Endothelial cell of umbilical vein (primary cell): ENCODE measurements at regions of chr7 and their contacts with region 1.

Region 1: DNA sequence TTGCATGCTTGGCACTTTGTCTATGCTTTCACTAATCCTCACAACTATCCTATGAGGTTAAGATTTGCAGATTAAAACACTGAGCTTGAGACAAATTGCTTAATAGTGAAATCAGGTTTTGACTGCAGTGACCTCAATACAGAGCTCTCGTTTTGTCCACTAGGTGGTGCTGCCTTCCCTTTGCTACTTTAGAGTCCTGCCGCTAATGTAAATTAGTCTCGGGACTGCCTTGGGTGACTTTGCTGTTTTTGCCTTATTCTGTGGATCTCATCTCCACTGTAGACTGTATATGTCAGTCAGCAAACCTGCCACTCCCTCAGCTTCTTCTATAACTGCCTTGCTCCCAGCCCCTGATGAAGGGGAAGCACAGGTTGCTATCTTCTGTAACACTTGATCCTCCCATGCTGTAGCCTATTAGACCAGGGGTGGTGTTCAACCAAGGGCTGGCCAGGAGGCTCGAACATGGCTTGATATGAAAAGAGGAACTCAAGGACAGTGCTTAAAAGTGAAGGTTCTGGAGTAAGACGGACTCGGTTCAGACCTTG is 26.0 kb downstream of the ASB4 start:
- DNase-seq: peak; percentile 65
- H3K4me3 ChIP-seq: no peak overlapping the region
- H3K27ac ChIP-seq: no peak overlapping the region
- H3K4me1 ChIP-seq: no peaks in the 10 kb centered on the region
- H3K27me3 ChIP-seq: peaks cover 12% of the 10 kb centered on the region in 2 experiments
- CTCF ChIP-seq: peak; percentile 72 to 84
- POLR2A ChIP-seq: no peak

Region 2: DNA sequence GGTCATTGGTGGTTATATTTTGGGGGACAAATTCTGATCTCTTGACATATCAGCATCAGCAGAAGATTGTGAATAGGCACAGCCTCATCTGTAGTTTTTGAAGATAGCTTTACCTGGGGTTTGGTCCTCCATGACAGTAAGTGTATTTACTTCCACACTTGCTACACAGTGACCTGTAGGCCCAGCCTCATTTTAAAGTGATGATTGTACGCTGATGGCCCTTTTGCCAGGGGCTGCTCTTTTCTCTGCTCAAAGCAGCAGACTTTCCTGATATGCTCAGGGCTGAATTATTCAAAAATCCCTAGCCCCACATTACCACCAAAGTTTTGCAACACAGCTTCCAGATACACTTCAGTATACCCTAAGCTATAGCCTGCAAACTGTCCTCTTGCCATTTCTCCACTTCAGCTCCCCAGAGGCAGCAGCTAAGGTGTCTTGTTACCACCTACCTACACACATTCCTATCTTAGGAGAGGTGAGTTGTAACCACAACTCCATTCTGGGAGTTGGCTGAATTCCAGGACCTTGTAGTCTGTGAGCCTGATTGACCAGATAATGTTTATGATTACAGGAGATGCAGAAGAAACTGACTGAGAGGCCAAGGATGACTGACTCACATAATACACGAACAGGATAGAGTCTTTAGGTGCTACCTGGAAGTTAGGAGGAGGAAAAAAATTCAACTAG is 20.0 kb before region 1 on chr7:
- CTCF ChIA-PET with region 1: interaction called, 25 read pairs
- POLR2A ChIA-PET with region 1: no interaction called
- dilution Hi-C with region 1: no loop called
- intact Hi-C with region 1: no loop called
- DNase-seq: no peak
- H3K4me3 ChIP-seq: no peak overlapping the region
- H3K27ac ChIP-seq: no peak overlapping the region
- H3K4me1 ChIP-seq: no peaks in the 10 kb centered on the region
- H3K27me3 ChIP-seq: peaks cover 3% of the 10 kb centered on the region in 2 experiments
- CTCF ChIP-seq: no peak
- POLR2A ChIP-seq: no peak

Region 3: DNA sequence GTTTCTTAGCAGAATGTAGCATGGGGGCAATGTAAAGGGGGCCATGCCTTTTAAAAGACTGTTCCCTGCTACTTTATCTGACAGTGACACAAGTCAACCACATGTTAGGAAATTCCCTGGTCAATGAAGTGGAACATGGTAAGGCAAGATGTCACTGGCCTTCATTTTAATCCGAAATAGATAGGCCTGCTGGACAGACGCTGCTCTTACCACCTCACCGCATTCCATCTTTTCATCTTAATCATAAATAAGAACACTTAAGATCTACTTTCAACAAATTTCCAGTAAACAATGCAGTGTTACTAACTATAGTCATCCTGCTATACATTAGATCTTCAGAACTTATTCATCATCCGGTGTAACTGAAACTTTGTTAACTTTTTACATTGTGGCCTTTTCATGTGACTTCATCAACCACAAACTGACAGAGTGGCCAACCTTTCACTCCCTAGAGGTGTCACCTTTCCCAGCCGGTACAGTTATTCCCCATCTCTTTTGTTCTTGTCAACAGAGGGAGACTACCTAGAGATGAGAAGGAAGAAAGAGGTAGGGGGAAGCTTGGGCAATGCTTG is 10.4 kb before region 1 on chr7:
- CTCF ChIA-PET with region 1: interaction called, 44 read pairs
- POLR2A ChIA-PET with region 1: no interaction called
- dilution Hi-C with region 1: no loop called
- intact Hi-C with region 1: no loop called
- DNase-seq: no peak
- H3K4me3 ChIP-seq: no peak overlapping the region
- H3K27ac ChIP-seq: no peak overlapping the region
- H3K4me1 ChIP-seq: peaks cover 9% of the 10 kb centered on the region
- H3K27me3 ChIP-seq: no peaks in the 10 kb centered on the region
- CTCF ChIP-seq: no peak
- POLR2A ChIP-seq: no peak

Region 4: GRCh38 chr7:95527033-95527775 is 15.4 kb after region 1 on chr7:
- CTCF ChIA-PET with region 1: interaction called, 94 read pairs
- POLR2A ChIA-PET with region 1: no interaction called
- dilution Hi-C with region 1: no loop called
- intact Hi-C with region 1: loop called (anchors 1 kb)
- DNase-seq: peak; percentile 52
- H3K4me3 ChIP-seq: no peak overlapping the region
- H3K27ac ChIP-seq: no peak overlapping the region
- H3K4me1 ChIP-seq: peaks cover 2% of the 10 kb centered on the region
- H3K27me3 ChIP-seq: peaks cover 12 to 13% of the 10 kb centered on the region in 2 experiments
- CTCF ChIP-seq: peak; percentile 75 to 78
- POLR2A ChIP-seq: no peak

Region 5: DNA sequence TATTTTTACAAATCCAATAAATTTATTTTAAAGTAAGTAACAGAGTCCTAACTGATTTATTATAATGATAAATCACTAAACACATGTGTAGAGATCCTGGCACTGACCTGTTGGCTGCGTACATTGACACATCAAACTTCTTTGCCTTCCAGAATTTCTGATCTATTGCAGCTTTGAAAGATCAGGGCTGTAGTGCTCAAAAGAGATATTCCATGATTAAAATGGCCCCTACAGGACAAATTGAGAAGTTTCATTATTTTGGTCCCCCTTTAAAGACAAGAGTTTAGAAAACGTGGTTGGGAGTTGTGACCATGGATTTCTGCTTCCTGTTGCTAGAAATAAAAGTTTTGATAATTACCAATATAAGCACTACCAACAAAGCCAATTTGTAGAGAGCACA is 172.2 kb after region 1 on chr7:
- CTCF ChIA-PET with region 1: interaction called, 788 read pairs
- POLR2A ChIA-PET with region 1: no interaction called
- dilution Hi-C with region 1: no loop called
- intact Hi-C with region 1: loop called (anchors 1 kb)
- DNase-seq: peak; percentile 48
- H3K4me3 ChIP-seq: no peak overlapping the region
- H3K27ac ChIP-seq: no peak overlapping the region
- H3K4me1 ChIP-seq: no peaks in the 10 kb centered on the region
- H3K27me3 ChIP-seq: peaks cover 0 to 2% of the 10 kb centered on the region in 2 experiments
- CTCF ChIP-seq: peak; percentile 11 to 16
- POLR2A ChIP-seq: no peak

Region 6: DNA sequence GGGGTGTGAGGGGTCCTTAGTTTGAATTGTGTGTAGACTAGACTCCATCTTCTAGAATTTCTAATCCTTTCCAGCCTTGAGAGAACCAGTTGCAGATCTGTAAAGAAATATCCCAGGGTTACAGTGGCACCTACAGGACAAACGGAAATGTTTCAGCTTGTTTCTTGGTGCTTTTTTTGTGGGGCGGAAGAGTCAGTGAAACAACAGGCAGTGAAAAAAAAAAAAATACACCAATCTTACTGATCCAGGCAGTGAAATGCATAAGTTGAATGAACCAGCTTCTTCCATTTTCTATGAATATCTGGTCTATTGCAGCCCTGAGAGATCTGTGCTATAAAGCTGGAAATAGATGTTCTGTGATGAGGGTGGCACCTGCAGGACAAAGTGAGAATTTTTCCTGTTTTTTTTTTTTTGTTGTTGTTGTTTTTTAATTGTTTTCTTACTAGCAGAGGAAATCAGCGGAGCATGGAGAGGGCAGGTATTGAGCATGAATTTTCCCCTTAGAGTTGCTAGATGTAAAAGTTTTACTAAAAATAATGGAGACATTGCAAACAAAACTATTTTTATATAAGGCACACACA is 178.7 kb after region 1 on chr7:
- CTCF ChIA-PET with region 1: interaction called, 788 read pairs
- POLR2A ChIA-PET with region 1: no interaction called
- dilution Hi-C with region 1: no loop called
- intact Hi-C with region 1: loop called (anchors 1 kb)
- DNase-seq: peak; percentile 59
- H3K4me3 ChIP-seq: no peak overlapping the region
- H3K27ac ChIP-seq: no peak overlapping the region
- H3K4me1 ChIP-seq: no peaks in the 10 kb centered on the region
- H3K27me3 ChIP-seq: peaks cover 0 to 5% of the 10 kb centered on the region in 2 experiments
- CTCF ChIP-seq: peak; percentile 37 to 42
- POLR2A ChIP-seq: no peak